ENCODE measurements at regions of chr11 and their contacts with region 1.

Region 1: DNA sequence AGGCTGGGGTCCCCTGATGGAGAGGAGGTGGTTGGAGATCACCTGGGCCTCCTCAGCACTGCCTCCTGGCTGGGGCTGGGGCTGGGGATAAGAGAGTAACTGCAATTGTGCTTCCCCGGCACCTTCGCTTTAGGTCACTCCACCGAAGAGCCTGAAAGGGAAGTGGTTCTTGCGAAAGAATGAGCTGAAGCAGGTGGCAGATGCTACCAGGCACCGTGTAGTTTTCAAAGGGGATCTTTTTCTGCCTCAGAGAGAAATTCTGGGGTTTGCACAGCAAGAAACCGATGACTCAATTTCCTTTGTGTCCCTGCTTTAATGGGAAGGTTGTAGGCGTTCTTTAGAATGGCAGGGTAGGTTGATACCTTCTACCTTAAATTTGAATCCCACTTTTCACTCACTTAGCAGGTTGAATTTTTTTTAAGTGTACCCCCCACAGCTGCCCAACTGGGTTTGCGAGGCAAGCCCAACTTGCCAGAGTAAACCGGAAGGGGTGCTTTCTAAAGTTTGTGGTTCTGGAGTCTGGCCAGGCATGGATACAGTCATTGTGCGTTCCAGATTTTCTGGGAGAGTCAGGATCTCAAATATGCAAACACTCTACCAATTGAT is 5.3 kb downstream of the CD44 start:
- DNase-seq: peak; percentile 69 to 91
- H3K4me3 ChIP-seq: peak overlapping the region; percentile 70
- H3K27ac ChIP-seq: peak overlapping the region; percentile 91
- H3K4me1 ChIP-seq: peaks cover 85% of the 10 kb centered on the region
- H3K27me3 ChIP-seq: no peaks in the 10 kb centered on the region
- CTCF ChIP-seq: no peak

Region 2: GRCh38 chr11:34926101-34926830 is 218.0 kb before region 1 on chr11:
- CTCF ChIA-PET with region 1: no interaction called
- POLR2A ChIA-PET with region 1: no interaction called
- intact Hi-C with region 1: loop called (anchors 5 kb)
- DNase-seq: peak; percentile 8 to 50
- H3K4me3 ChIP-seq: no peak overlapping the region
- H3K27ac ChIP-seq: no peak overlapping the region
- H3K4me1 ChIP-seq: peaks cover 13% of the 10 kb centered on the region
- H3K27me3 ChIP-seq: no peaks in the 10 kb centered on the region
- CTCF ChIP-seq: peak; percentile 94

Region 3: DNA sequence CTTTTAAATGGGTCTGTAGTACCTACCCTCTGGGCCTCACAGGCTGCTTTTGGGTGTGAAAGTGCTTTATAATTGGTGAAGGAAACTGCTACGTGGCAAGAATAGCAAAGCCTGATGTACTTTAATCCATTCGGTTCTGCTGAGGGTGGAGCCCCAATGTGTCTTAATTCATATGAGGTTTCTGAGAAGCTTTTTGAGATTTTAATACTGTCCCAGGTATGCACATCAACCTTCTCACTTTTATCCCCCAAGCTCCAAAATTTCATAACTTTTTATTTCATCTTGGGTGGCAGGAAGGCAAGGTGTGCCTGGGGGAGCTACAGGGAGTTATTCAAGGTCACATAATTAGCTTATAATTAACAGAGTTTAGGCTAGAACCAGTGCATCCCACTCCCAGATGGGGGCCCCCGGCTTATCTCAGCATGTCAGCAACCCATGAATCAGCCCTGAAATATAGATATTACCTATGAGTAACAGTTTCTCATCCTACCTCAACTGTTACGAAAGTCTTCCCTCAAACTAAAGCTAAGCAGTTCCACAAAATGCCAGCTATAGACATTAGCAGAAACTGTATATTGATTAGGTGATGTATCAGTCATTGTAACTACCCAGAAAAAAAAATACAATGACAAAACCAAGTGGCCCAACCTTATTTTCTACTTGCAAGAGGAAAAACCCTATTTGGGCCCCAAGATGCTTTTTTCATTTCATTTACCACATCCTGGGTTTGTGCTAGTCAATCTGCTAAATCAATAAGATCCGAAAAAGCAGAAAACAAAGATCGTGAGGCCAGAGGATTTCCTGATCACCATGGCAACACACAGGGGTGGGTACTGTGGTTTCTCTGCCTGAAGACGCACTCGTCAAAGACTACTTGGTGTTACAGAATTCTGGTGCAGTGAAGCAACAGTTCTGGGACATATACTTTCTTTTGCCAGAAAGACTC is 21.5 kb after region 1 on chr11:
- CTCF ChIA-PET with region 1: interaction called, 4 read pairs
- POLR2A ChIA-PET with region 1: interaction called, 4 read pairs
- intact Hi-C with region 1: loop called (anchors 1 kb)
- DNase-seq: peak in 1 of 2 experiments; percentile 85
- H3K4me3 ChIP-seq: peak overlapping the region; percentile 36
- H3K27ac ChIP-seq: peak overlapping the region; percentile 94
- H3K4me1 ChIP-seq: peaks cover 100% of the 10 kb centered on the region
- H3K27me3 ChIP-seq: no peaks in the 10 kb centered on the region
- CTCF ChIP-seq: no peak

Region 4: DNA sequence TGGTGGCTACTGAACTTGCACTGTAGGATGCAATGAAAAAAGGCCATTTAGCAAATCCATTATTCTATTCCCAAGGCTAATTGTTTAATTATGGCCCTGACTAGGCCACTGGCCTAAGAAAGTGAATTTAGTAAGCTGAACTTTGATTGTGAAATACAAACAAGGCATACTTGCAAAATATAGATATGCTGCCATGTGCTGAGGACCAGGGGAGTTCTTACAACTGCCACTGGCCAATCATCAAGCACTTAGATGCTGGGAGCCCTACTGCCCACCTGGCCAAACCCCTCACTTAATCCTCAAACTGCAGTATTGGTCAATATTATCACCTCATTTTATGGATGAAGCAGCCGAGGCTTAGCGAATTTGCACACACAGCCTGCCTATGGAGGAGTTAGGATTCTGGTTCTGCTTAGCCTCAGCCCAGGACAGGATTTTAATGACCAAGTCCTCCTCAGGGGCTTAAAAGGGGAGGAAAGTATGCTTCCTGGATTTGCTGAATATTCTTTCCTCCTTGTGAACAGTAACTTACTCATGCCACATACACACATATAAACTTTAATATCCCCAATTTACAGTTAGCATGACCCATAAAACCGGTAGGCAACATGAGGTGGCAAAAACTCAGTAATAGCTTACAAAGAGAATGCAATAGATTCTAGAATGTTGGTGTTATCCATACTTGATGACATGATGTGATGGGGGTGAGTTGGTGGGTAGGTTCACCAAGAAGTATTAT is 34.0 kb after region 1 on chr11:
- CTCF ChIA-PET with region 1: interaction called, 6 read pairs
- POLR2A ChIA-PET with region 1: interaction called, 12 read pairs
- intact Hi-C with region 1: loop called (anchors 1 kb)
- DNase-seq: no peak
- H3K4me3 ChIP-seq: no peak overlapping the region
- H3K27ac ChIP-seq: peak overlapping the region; percentile 63
- H3K4me1 ChIP-seq: peaks cover 87% of the 10 kb centered on the region
- H3K27me3 ChIP-seq: no peaks in the 10 kb centered on the region
- CTCF ChIP-seq: no peak

Region 5: GRCh38 chr11:35363854-35364780 is 219.9 kb after region 1 on chr11:
- CTCF ChIA-PET with region 1: no interaction called
- POLR2A ChIA-PET with region 1: no interaction called
- intact Hi-C with region 1: loop called (anchors 10 kb)
- DNase-seq: peak; percentile 89 to 98
- H3K4me3 ChIP-seq: peak overlapping the region; percentile 22; the same call in 1 of the 2 replicates
- H3K27ac ChIP-seq: peak overlapping the region; percentile 84
- H3K4me1 ChIP-seq: peaks cover 40% of the 10 kb centered on the region
- H3K27me3 ChIP-seq: no peaks in the 10 kb centered on the region
- CTCF ChIP-seq: no peak